Naive thymus-derived CD4-positive, alpha-beta T cell (primary cell): ENCODE measurements at regions of chr4 and their contacts with region 1.

Region 1: DNA sequence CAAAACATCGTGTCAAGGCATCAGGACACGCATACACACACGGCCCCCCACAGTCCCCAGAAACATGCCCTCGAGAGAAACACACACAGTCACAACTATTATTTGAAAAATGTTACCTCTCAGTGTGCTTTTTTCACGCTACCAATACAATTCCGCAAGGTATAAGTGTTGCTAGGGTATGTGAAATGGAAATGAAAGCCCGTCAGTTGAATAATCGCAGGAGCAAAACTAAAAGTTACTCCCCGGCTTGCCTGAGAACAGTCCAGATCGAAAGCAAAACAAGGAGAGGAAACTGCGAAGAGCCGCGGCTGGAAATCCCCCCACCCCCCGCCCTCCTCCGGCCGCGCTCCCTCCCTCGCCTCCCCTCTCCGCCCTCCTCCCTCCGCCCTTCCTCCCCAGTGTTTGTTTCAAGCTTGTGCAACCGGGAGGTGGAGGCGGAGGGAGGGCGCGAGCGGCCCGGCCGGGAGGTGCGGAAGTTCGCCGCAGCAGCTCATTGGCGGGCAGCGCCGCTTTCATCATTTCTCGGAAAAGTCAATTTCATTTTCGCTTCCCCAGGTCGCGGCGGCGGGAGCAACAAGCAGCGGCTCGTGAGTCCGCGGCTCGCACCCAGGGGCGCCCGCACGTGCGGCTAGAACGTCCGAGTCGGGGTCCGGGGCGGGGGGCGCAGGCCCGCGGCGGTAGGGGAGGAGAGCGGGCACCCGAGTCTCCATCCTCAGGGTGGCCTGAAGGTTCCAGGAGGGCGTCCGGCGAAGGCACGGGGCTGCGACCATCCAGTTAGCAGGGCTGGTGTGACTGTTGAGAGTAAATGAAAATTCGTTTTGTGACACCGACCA is at the start of gene IRF2:
- DNase-seq: peak; percentile 80 to 98 (median 95)
- ATAC-seq: peak; percentile 93
- H3K4me3 ChIP-seq: peak within 1 kb of the TSS; percentile 89
- H3K4me3 Mint-ChIP-seq: peak within 1 kb of the TSS; percentile 97 to 100 (median 99)
- H3K27ac ChIP-seq: peak within 1 kb of the TSS; percentile 96
- H3K27ac Mint-ChIP-seq: peak within 1 kb of the TSS; percentile 95 to 100 (median 99)
- H3K4me1 ChIP-seq: peaks cover 27 to 34% of the 10 kb centered on the region in 2 donors
- H3K4me1 Mint-ChIP-seq: peaks cover 39 to 72% (median 66%) of the 10 kb centered on the region in 7 donors
- H3K27me3 ChIP-seq: no peaks in the 10 kb centered on the region
- H3K27me3 Mint-ChIP-seq: peaks cover 0 to 4% (median 0%) of the 10 kb centered on the region in 5 donors
- total RNA-seq, gene IRF2: 31.2 to 86.3 (median 75.0) TPM

Region 2: DNA sequence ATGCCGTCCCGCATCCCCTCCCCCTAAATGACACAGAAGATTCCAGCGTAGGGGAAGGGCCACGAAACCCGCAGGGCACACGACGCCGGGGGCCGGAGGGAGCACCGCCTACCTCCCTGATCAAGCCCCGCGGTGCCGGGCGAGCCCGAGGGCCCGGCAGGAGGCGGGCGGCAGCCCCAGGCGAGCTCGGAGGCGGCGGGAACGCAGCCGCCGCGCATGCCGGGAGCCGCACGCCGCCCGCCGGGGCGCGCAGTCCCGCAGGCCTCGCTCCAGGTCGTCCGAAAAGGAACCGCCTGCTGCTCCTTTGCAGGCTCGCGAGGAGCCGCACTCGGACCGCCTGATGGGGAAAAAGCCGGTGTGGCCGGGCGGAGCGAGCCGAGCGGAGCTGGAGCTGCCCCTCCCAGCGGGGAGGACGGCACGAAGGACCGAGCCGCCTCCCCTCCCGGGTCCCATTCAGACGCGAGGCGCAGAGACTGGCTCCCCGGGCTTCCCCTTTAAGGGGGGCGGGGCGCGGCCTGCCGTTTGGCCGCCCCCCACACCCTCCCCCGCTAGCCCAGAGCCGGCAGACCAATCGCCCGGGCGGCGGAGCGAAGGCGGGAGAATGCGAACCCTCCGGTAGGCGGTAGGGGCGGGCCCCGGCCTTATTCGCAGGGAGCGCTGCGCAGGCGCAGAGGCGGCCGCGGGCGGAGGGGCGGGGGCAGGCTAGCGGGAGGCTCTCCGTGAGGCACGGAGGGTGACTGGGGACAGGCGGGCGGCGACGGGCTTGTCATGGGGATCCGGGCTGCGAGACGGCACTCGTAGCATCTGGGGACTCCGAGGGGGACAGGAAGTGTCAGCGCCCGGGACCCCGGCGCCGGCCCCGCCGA is 970.2 kb before region 1 on chr4:
- CTCF ChIA-PET with region 1: no interaction called
- POLR2A ChIA-PET with region 1: interaction called, 3 read pairs
- intact Hi-C with region 1: loop called (anchors 1 kb)
- DNase-seq: peak; percentile 98 to 100 (median 100)
- ATAC-seq: peak; percentile 89
- H3K4me3 ChIP-seq: peak overlapping the region; percentile 90
- H3K4me3 Mint-ChIP-seq: peak overlapping the region; percentile 83 to 98 (median 92)
- H3K27ac ChIP-seq: peak overlapping the region; percentile 86
- H3K27ac Mint-ChIP-seq: peak overlapping the region; percentile 89 to 99 (median 95)
- H3K4me1 ChIP-seq: peaks cover 6 to 11% of the 10 kb centered on the region in 2 donors
- H3K4me1 Mint-ChIP-seq: peaks cover 11 to 47% (median 43%) of the 10 kb centered on the region in 7 donors
- H3K27me3 ChIP-seq: no peaks in the 10 kb centered on the region
- H3K27me3 Mint-ChIP-seq: no peaks in the 10 kb centered on the region

Region 3: DNA sequence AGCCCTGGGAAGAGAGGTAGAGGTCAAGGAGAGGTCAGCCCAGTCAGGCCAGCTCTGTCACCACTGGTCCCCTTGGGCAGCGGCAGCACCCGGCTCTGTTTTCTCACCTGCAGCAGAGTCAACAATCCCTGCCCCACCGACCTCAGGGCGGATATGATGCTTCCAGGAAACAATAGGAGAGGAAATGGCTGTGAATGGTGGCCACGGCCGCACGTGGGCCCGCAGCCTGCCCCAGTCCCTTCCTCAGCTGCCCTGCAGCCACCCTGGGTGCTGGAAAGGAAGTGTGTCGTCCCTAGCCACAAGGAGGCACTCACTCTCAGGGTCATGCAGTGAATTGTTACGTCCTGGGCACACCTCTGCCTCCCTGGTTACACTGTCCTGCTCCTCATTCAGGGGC is 164.3 kb before region 1 on chr4:
- CTCF ChIA-PET with region 1: no interaction called
- POLR2A ChIA-PET with region 1: no interaction called
- intact Hi-C with region 1: loop called (anchors 1 to 2 kb)
- DNase-seq: peak in 5 of 9 donors; percentile 10 to 29 (median 25)
- ATAC-seq: peak; percentile 80
- H3K4me3 ChIP-seq: no peak overlapping the region
- H3K4me3 Mint-ChIP-seq: peak overlapping the region in 8 of 10 donors; percentile 1 to 73 (median 15)
- H3K27ac ChIP-seq: no peak overlapping the region
- H3K27ac Mint-ChIP-seq: peak overlapping the region; percentile 4 to 77 (median 44)
- H3K4me1 ChIP-seq: peaks cover 6 to 15% of the 10 kb centered on the region in 2 donors
- H3K4me1 Mint-ChIP-seq: peaks cover 22 to 63% (median 29%) of the 10 kb centered on the region in 7 donors
- H3K27me3 ChIP-seq: no peaks in the 10 kb centered on the region
- H3K27me3 Mint-ChIP-seq: no peaks in the 10 kb centered on the region

Region 4: DNA sequence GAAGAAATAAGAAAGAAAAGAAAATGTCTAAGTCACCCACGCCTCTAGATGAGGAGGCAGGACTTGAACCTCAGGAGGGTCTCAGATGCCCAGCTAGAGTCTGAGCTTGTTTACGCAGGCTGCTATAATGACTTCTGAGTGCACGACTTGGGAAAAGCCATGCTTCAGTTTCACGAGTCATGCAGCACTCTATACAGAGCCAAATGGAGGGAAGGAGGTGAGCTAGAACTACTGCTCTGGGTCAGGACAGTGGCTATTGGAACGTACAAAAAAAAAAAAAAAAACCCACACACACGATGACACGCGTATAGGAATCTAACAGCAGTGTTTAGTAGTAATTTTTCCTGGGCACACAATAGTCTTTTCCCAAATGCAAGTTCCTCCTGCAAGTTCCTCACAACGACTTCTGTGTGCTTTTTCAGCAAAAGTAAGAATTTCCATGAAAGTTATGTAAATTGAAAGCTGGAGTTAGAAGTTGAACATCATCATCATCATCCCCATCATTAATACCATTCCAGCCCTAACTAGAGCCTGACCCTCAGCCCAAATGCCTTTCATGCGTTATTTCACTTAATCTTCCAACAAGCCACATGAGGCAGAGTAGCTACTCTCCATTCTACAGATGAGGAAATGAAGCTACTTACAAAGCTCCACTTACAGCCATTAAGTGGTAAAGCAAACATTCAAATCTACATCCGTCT is 36.8 kb before region 1 on chr4:
- CTCF ChIA-PET with region 1: no interaction called
- POLR2A ChIA-PET with region 1: no interaction called
- intact Hi-C with region 1: loop called in 1 of 2 experiments (anchors 5 kb)
- DNase-seq: peak in 1 of 9 donors; percentile 30
- ATAC-seq: peak; percentile 65
- H3K4me3 ChIP-seq: no peak overlapping the region
- H3K4me3 Mint-ChIP-seq: peak overlapping the region in 5 of 10 donors; percentile 12 to 58 (median 45)
- H3K27ac ChIP-seq: no peak overlapping the region
- H3K27ac Mint-ChIP-seq: peak overlapping the region in 7 of 9 donors; percentile 46 to 89 (median 61)
- H3K4me1 ChIP-seq: peaks cover 5 to 33% of the 10 kb centered on the region in 2 donors
- H3K4me1 Mint-ChIP-seq: peaks cover 55 to 91% (median 90%) of the 10 kb centered on the region in 7 donors
- H3K27me3 ChIP-seq: no peaks in the 10 kb centered on the region
- H3K27me3 Mint-ChIP-seq: no peaks in the 10 kb centered on the region

Region 5: GRCh38 chr4:184514121-184514988 is 39.9 kb after region 1 on chr4:
- CTCF ChIA-PET with region 1: no interaction called
- POLR2A ChIA-PET with region 1: interaction called, 3 read pairs
- intact Hi-C with region 1: loop called in 1 of 2 experiments (anchors 1 kb)
- DNase-seq: peak in 1 of 9 donors; percentile 68
- ATAC-seq: peak; percentile 83
- H3K4me3 ChIP-seq: no peak overlapping the region
- H3K4me3 Mint-ChIP-seq: peak overlapping the region in 5 of 10 donors; percentile 2 to 70 (median 18)
- H3K27ac ChIP-seq: no peak overlapping the region
- H3K27ac Mint-ChIP-seq: peak overlapping the region in 2 of 9 donors; percentile 79 to 84
- H3K4me1 ChIP-seq: no peaks in the 10 kb centered on the region
- H3K4me1 Mint-ChIP-seq: peaks cover 6 to 32% (median 14%) of the 10 kb centered on the region in 7 donors
- H3K27me3 ChIP-seq: no peaks in the 10 kb centered on the region
- H3K27me3 Mint-ChIP-seq: no peaks in the 10 kb centered on the region

Region 6: GRCh38 chr4:184825896-184826690 is 351.6 kb after region 1 on chr4 and contains the start of gene ACSL1:
- CTCF ChIA-PET with region 1: no interaction called
- POLR2A ChIA-PET with region 1: no interaction called
- intact Hi-C with region 1: loop called (anchors 1 to 5 kb)
- DNase-seq: peak; percentile 63 to 83 (median 75)
- ATAC-seq: peak; percentile 95
- H3K4me3 ChIP-seq: peak within 1 kb of the TSS; percentile 59
- H3K4me3 Mint-ChIP-seq: peak within 1 kb of the TSS; percentile 89 to 94 (median 91)
- H3K27ac ChIP-seq: peak within 1 kb of the TSS; percentile 73
- H3K27ac Mint-ChIP-seq: peak within 1 kb of the TSS; percentile 79 to 91 (median 90)
- H3K4me1 ChIP-seq: peaks cover 4 to 7% of the 10 kb centered on the region in 2 donors
- H3K4me1 Mint-ChIP-seq: peaks cover 21 to 46% (median 33%) of the 10 kb centered on the region in 7 donors
- H3K27me3 ChIP-seq: no peaks in the 10 kb centered on the region
- H3K27me3 Mint-ChIP-seq: peaks cover 0 to 25% (median 0%) of the 10 kb centered on the region in 5 donors
- total RNA-seq, gene ACSL1: 9.5 to 80.1 (median 20.4) TPM

Region 7: GRCh38 chr4:186191200-186192065 is 1717.0 kb after region 1 on chr4 and contains the start of gene CYP4V2:
- CTCF ChIA-PET with region 1: interaction called, 3 read pairs
- POLR2A ChIA-PET with region 1: no interaction called
- intact Hi-C with region 1: loop called in 1 of 2 experiments (anchors 10 kb)
- DNase-seq: peak; percentile 68 to 94 (median 90)
- ATAC-seq: peak; percentile 90
- H3K4me3 ChIP-seq: peak within 1 kb of the TSS; percentile 91
- H3K4me3 Mint-ChIP-seq: peak within 1 kb of the TSS; percentile 89 to 97 (median 94)
- H3K27ac ChIP-seq: peak within 1 kb of the TSS; percentile 95
- H3K27ac Mint-ChIP-seq: peak within 1 kb of the TSS; percentile 94 to 99 (median 98)
- H3K4me1 ChIP-seq: peaks cover 12 to 19% of the 10 kb centered on the region in 2 donors
- H3K4me1 Mint-ChIP-seq: peaks cover 34 to 62% (median 56%) of the 10 kb centered on the region in 7 donors
- H3K27me3 ChIP-seq: no peaks in the 10 kb centered on the region
- H3K27me3 Mint-ChIP-seq: no peaks in the 10 kb centered on the region
- total RNA-seq, gene CYP4V2: 19.7 to 41.4 (median 26.0) TPM